Right ventricle myocardium inferior (tissue), 1 donor: ENCODE measurements at regions of chr9 and their contacts with region 1.

Region 1: DNA sequence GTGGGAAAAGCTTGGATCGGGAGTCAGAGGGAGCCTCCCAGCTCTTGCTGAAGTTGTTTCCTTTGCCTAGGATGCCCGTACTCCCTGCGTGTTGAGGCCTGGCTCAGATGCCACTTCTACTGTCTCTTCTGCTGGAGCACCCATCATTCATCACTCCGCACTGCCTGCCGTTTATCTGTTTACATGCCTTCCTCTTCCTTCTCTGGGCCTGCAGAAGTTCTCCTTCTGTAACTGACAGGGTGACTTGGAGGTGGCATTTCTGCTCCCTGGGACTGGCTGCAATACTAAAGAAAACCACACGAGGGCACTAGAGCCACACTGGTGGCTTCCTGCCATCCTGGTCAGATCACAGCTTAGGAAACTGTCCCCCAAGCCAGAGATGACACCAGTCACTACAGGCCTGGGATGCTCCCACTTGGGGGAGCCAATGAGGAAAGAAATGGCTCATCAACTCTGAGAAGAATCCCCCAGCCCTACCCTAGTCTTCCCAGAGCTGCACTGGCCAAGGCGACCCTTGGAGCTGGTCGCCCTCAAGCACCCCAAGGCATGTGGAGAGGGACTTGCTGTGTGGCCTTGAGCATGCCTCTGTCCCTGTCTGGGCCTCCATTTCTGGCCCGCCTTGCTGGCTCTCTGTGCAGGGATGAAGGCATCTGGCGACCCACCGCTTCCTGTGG is 9.7 kb upstream of the SLC25A51 start:
- DNase-seq: peak; percentile 81
- ATAC-seq: peak; percentile 85

Region 2: GRCh38 chr9:37775216-37775919 is 138.2 kb before region 1 on chr9:
- intact Hi-C with region 1: no loop called
- DNase-seq: no peak
- ATAC-seq: no peak

Region 3: GRCh38 chr9:37889536-37889935 is 24.1 kb before region 1 on chr9:
- intact Hi-C with region 1: no loop called
- DNase-seq: no peak
- ATAC-seq: no peak

Region 4: DNA sequence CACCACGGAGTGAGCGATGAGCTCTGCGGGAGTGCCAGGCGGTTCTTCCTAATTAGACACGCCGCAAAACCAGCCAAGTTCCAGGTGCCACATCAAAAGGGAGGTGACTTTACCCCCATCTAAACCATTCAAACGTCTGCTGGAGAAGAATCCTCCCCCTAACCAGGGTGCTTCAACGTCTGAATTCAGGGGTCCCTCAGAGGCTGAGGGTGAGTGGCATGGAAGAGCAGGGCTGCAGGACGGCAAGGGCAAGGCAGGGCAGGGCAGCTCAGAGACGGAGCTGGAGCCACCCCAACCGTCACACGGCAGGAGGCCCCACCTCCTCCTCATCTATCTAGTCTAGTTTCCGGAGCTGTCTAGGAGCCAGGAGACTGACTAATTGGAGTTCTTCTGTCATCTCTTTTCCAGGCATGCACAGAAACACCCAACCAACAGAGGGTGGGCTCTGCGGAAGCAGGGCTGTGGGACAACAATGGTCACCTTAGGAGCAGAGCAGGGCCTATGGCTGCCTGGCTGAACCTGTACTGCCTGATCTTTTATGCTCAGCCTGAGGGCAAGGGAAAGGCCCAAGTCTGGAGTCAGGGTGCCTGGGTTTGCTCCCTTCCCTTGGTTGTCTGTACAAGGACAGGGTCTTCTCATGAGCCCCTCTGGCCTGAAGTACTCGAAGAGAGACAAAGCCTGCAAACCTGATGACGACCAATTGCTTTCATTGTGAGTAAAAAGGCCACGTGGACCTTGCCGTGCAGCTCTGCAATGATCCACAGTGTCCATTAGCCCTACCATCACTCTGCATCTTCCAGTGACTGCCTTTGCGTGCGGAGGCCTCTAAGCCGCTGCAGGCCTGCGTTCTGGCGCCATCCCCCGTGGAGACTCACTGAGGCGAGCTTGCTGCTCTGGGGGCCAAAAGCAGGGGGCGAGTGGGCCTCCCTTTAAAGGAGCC is 71.3 kb after region 1 on chr9:
- intact Hi-C with region 1: loop called (anchors 5 kb)
- DNase-seq: no peak
- ATAC-seq: peak; percentile 68

Region 5: GRCh38 chr9:38017149-38017884 is 103.7 kb after region 1 on chr9:
- intact Hi-C with region 1: no loop called
- DNase-seq: no peak
- ATAC-seq: peak; percentile 72

Region 6: GRCh38 chr9:38088006-38088925 is 174.6 kb after region 1 on chr9:
- intact Hi-C with region 1: loop called (anchors 5 kb)
- DNase-seq: peak; percentile 86
- ATAC-seq: peak; percentile 77

Region 7: DNA sequence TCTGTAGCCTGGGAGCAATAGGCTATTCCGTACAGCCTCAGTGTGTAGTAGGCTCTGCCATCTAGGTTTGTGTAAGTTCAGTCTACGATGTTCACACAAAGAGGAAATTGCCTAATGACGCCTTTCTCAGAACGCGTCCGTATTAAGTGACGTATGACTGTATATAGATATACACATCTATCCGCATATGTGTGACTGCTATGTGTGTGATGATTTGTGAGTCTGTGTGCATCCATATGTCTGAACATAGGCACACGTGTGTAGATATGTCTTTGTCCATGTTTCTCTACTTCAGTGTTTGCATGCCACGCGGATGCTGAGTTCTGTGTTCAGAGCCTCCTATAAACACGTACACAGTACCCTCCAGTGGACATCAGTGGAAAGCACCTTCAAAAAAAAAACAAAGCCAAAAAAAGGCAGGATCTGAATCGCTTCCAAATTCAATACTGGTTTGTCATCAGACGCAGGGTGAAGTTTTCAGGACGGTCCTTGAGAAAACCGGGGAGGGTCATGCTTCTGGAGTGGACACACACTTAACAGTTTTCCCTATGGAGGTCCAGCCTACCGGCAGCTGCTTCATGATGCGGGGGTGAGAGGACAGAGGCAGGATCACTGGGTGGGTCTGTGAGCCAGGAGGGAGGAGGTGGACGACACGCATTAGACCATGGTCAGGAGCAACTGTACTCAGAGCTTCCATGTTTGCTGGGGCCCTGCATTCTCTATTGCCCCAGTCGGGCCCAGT is 449.4 kb after region 1 on chr9:
- intact Hi-C with region 1: loop called (anchors 2 kb)
- DNase-seq: no peak
- ATAC-seq: peak; percentile 78